BJ (cell line): ENCODE measurements at regions of chr4 and their contacts with region 1.

Region 1: GRCh38 chr4:53490965-53491622 is 100.2 kb downstream of the LNX1 start:
- DNase-seq: peak; percentile 86
- H3K4me3 ChIP-seq: no peak overlapping the region
- H3K27me3 ChIP-seq: no peaks in the 10 kb centered on the region
- CTCF ChIP-seq: peak; percentile 75

Region 2: GRCh38 chr4:53465281-53465680 is 25.8 kb before region 1 on chr4:
- CTCF ChIA-PET with region 1: no interaction called
- POLR2A ChIA-PET with region 1: no interaction called
- DNase-seq: no peak
- H3K4me3 ChIP-seq: no peak overlapping the region
- H3K27me3 ChIP-seq: no peaks in the 10 kb centered on the region
- CTCF ChIP-seq: no peak

Region 3: GRCh38 chr4:53476232-53477037 is 14.7 kb before region 1 on chr4:
- CTCF ChIA-PET with region 1: interaction called, 10 read pairs
- POLR2A ChIA-PET with region 1: no interaction called
- DNase-seq: peak; percentile 99
- H3K4me3 ChIP-seq: no peak overlapping the region
- H3K27me3 ChIP-seq: no peaks in the 10 kb centered on the region
- CTCF ChIP-seq: no peak

Region 4: GRCh38 chr4:53507058-53507457 is 16.0 kb after region 1 on chr4:
- CTCF ChIA-PET with region 1: interaction called, 4 read pairs
- POLR2A ChIA-PET with region 1: interaction called, 10 read pairs
- DNase-seq: no peak
- H3K4me3 ChIP-seq: no peak overlapping the region
- H3K27me3 ChIP-seq: no peaks in the 10 kb centered on the region
- CTCF ChIP-seq: no peak

Region 5: GRCh38 chr4:53763813-53764597 is 272.9 kb after region 1 on chr4:
- CTCF ChIA-PET with region 1: no interaction called
- POLR2A ChIA-PET with region 1: no interaction called
- DNase-seq: peak; percentile 75
- H3K4me3 ChIP-seq: no peak overlapping the region
- H3K27me3 ChIP-seq: no peaks in the 10 kb centered on the region
- CTCF ChIP-seq: no peak